Activated naive CD4-positive, alpha-beta T cell treated with anti-CD3 and anti-CD28 coated beads for 36 hours (primary cell): ENCODE measurements at regions of chr20 and their contacts with region 1.

Region 1: GRCh38 chr20:973785-974194 is 28.3 kb downstream of the RSPO4 start:
- DNase-seq: peak; percentile 70
- H3K4me3 Mint-ChIP-seq: no peak overlapping the region
- H3K27ac Mint-ChIP-seq: no peak overlapping the region
- H3K4me1 Mint-ChIP-seq: peaks cover 3% of the 10 kb centered on the region
- H3K27me3 Mint-ChIP-seq: no peaks in the 10 kb centered on the region

Region 2: GRCh38 chr20:884983-885952 is 88.5 kb before region 1 on chr20:
- CTCF ChIA-PET with region 1: no interaction called
- intact Hi-C with region 1: no loop called
- DNase-seq: peak; percentile 32
- H3K4me3 Mint-ChIP-seq: no peak overlapping the region
- H3K27ac Mint-ChIP-seq: no peak overlapping the region
- H3K4me1 Mint-ChIP-seq: peaks cover 13% of the 10 kb centered on the region
- H3K27me3 Mint-ChIP-seq: peaks cover 14% of the 10 kb centered on the region

Region 3: GRCh38 chr20:1108437-1108920 is 134.7 kb after region 1 on chr20:
- CTCF ChIA-PET with region 1: interaction called, 8 read pairs
- intact Hi-C with region 1: loop called (anchors 5 kb)
- DNase-seq: peak; percentile 76
- H3K4me3 Mint-ChIP-seq: no peak overlapping the region
- H3K27ac Mint-ChIP-seq: no peak overlapping the region
- H3K4me1 Mint-ChIP-seq: peaks cover 3% of the 10 kb centered on the region
- H3K27me3 Mint-ChIP-seq: no peaks in the 10 kb centered on the region

Region 4: GRCh38 chr20:1185790-1186334 is 212.1 kb after region 1 on chr20:
- CTCF ChIA-PET with region 1: no interaction called
- intact Hi-C with region 1: loop called (anchors 10 kb)
- DNase-seq: peak; percentile 68
- H3K4me3 Mint-ChIP-seq: peak overlapping the region; percentile 41
- H3K27ac Mint-ChIP-seq: no peak overlapping the region
- H3K4me1 Mint-ChIP-seq: peaks cover 6% of the 10 kb centered on the region
- H3K27me3 Mint-ChIP-seq: peaks cover 24% of the 10 kb centered on the region

Region 5: GRCh38 chr20:1212607-1213396 is 239.0 kb after region 1 on chr20:
- CTCF ChIA-PET with region 1: interaction called, 3 read pairs
- intact Hi-C with region 1: loop called (anchors 1 kb)
- DNase-seq: peak; percentile 88
- H3K4me3 Mint-ChIP-seq: no peak overlapping the region
- H3K27ac Mint-ChIP-seq: no peak overlapping the region
- H3K4me1 Mint-ChIP-seq: peaks cover 39% of the 10 kb centered on the region
- H3K27me3 Mint-ChIP-seq: no peaks in the 10 kb centered on the region